ENCODE measurements at regions of chr3 and their contacts with region 1.

Region 1: GRCh38 chr3:196684548-196685407 is 27.3 kb downstream of the CEP19 start:
- DNase-seq: peak; percentile 57
- ATAC-seq: peak; percentile 78

Region 2: DNA sequence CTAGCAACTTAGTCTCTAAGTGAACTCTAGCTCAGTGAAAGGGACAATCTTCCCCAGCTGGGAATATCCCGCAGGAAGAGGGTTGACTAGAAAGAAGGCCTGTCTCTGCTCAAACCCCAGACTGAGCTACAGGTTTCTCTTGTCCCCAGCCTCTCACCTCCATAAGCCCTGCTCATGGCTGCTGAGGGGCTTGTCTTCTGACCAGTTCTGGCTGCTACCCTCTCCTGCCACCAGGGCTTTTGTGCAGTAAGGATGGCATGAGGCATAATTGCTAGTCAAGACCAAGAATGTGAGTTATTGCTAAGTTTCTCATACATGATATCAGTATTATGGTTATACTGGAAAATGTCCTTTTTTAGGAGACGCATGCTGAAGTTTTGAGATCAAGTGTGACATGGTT is 137.7 kb before region 1 on chr3:
- intact Hi-C with region 1: loop called (anchors 10 kb)
- DNase-seq: no peak
- ATAC-seq: no peak

Region 3: GRCh38 chr3:196609343-196609775 is 75.4 kb before region 1 on chr3:
- intact Hi-C with region 1: loop called (anchors 5 kb)
- DNase-seq: peak; percentile 92
- ATAC-seq: peak; percentile 97

Measured in Right ventricle myocardium superior (tissue), 1 donor.